Mammary epithelial cell (primary cell): ENCODE measurements at regions of chr17 and their contacts with region 1.

Region 1: DNA sequence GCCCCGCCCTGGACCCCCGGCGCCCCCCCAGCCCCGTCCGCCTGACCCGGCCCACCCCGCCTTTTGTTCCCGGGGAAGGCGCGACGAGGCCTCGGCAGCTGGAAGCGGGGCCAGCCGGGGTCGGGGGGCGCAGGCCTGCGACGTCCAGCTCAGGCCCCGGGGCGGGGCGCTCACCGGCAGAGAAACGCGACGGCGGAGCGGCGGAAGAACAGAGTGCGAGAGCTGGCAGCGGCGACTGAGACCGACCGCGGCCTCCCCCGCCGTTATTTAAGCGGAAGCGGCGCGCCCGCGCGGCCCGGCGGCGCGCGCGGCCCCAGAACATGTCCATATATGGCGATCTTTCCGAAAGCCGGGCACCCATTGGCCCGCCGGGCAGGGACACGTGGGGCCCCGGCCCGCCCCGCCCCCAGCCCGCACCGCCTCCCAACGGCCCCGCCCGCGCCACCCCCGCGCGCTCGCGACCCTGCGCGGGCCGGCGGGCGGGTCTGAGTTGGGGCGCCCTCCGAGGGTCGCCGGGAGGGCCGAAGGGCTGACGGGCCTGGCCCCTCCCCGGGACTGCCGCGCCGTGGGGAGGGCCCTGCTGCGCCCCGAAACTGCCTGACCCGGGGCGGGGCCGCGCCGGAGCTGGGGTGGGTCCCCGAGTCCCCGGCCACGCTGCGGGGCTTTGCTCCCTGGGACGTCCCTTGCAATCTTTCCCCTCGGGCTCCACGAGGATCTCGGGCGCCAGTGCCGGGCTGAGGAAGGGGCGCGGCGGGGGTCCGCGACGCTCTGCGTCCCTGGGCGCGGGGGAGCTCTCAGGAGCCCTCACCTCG is at the start of gene ACTG1:
- DNase-seq: peak; percentile 91
- H3K4me3 ChIP-seq: peak within 1 kb of the TSS; percentile 90 to 100 (median 93)
- H3K27ac ChIP-seq: peak within 1 kb of the TSS; percentile 70
- H3K4me1 ChIP-seq: peaks cover 40% of the 10 kb centered on the region
- H3K27me3 ChIP-seq: no peaks in the 10 kb centered on the region
- CTCF ChIP-seq: no peak
- total RNA-seq, gene ACTG1: 3,950 to 24,255 TPM

Region 2: GRCh38 chr17:81238817-81239600 is 273.8 kb before region 1 on chr17 and contains the starts of genes NDUFAF8 and TEPSIN:
- CTCF ChIA-PET with region 1: no interaction called
- dilution Hi-C with region 1: loop called (anchors 5 kb)
- in situ Hi-C with region 1: no loop called
- intact Hi-C with region 1: no loop called
- DNase-seq: peak; percentile 100
- H3K4me3 ChIP-seq: peak within 1 kb of the TSS; percentile 71 to 94 (median 91)
- H3K27ac ChIP-seq: peak within 1 kb of the TSS; percentile 75
- H3K4me1 ChIP-seq: peaks cover 19% of the 10 kb centered on the region
- H3K27me3 ChIP-seq: no peaks in the 10 kb centered on the region
- CTCF ChIP-seq: no peak
- total RNA-seq, gene NDUFAF8: 14.7 to 98.1 TPM
- total RNA-seq, gene TEPSIN: 15.7 to 25.7 TPM

Region 3: GRCh38 chr17:81272616-81273015 is 240.2 kb before region 1 on chr17:
- CTCF ChIA-PET with region 1: no interaction called
- dilution Hi-C with region 1: loop called (anchors 5 kb)
- in situ Hi-C with region 1: no loop called
- intact Hi-C with region 1: no loop called
- DNase-seq: no peak
- H3K4me3 ChIP-seq: no peak overlapping the region
- H3K27ac ChIP-seq: no peak overlapping the region
- H3K4me1 ChIP-seq: no peaks in the 10 kb centered on the region
- H3K27me3 ChIP-seq: no peaks in the 10 kb centered on the region
- CTCF ChIP-seq: no peak

Region 4: GRCh38 chr17:81381632-81382577 is 130.9 kb before region 1 on chr17:
- CTCF ChIA-PET with region 1: no interaction called
- dilution Hi-C with region 1: no loop called
- in situ Hi-C with region 1: no loop called
- intact Hi-C with region 1: no loop called
- DNase-seq: no peak
- H3K4me3 ChIP-seq: no peak overlapping the region
- H3K27ac ChIP-seq: no peak overlapping the region
- H3K4me1 ChIP-seq: peaks cover 14% of the 10 kb centered on the region
- H3K27me3 ChIP-seq: no peaks in the 10 kb centered on the region
- CTCF ChIP-seq: no peak

Region 5: GRCh38 chr17:81566461-81567126 is 53.8 kb after region 1 on chr17:
- CTCF ChIA-PET with region 1: no interaction called
- dilution Hi-C with region 1: loop called (anchors 5 kb)
- in situ Hi-C with region 1: no loop called
- intact Hi-C with region 1: no loop called
- DNase-seq: peak; percentile 79
- H3K4me3 ChIP-seq: peak overlapping the region in 2 of 3 experiments; percentile 10 to 12
- H3K27ac ChIP-seq: peak overlapping the region; percentile 8
- H3K4me1 ChIP-seq: peaks cover 33% of the 10 kb centered on the region
- H3K27me3 ChIP-seq: no peaks in the 10 kb centered on the region
- CTCF ChIP-seq: no peak

Region 6: DNA sequence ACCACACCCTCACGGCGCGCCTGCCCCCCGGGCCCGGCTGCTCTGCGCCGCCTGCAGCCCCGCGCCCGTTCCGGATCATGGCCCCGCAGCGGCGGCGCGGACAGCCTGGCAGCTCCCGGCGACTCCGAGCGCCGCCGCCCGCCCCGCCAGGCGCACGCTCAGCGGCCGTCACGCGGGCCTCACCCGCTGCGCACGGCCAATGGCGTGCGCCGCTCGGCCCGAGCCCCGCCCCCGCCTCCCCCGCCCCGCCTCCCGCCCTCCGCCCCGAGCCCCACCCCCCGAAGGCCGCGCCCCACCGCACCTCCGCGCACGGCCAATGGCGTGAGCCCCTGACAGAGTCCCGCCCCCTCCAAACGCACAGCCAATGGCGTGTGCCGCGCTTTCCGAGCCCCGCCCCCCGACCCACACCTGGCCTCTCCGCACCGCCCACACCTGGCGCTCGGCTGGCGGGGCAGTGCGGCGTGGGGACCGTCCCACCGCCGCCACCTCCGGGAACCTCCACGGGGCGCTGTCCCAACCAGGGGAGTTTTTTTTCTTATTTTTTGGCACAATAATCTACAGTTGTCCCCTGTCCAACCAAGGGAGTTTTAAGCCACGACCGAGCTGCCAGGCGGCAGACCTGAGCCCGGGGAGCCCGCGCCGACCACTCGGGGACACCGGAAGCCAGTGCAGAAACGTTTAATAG is 398.7 kb after region 1 on chr17 and contains the start of gene PCYT2:
- CTCF ChIA-PET with region 1: no interaction called
- dilution Hi-C with region 1: loop called (anchors 10 kb)
- in situ Hi-C with region 1: no loop called
- intact Hi-C with region 1: no loop called
- DNase-seq: peak; percentile 85
- H3K4me3 ChIP-seq: peak within 1 kb of the TSS; percentile 81 to 92 (median 83)
- H3K27ac ChIP-seq: peak within 1 kb of the TSS; percentile 19
- H3K4me1 ChIP-seq: peaks cover 12% of the 10 kb centered on the region
- H3K27me3 ChIP-seq: no peaks in the 10 kb centered on the region
- CTCF ChIP-seq: peak in 1 of 2 donors; percentile 2
- total RNA-seq, gene PCYT2: 23.5 to 48.7 TPM